ENCODE measurements at regions of chr11 and their contacts with region 1.

Region 1: DNA sequence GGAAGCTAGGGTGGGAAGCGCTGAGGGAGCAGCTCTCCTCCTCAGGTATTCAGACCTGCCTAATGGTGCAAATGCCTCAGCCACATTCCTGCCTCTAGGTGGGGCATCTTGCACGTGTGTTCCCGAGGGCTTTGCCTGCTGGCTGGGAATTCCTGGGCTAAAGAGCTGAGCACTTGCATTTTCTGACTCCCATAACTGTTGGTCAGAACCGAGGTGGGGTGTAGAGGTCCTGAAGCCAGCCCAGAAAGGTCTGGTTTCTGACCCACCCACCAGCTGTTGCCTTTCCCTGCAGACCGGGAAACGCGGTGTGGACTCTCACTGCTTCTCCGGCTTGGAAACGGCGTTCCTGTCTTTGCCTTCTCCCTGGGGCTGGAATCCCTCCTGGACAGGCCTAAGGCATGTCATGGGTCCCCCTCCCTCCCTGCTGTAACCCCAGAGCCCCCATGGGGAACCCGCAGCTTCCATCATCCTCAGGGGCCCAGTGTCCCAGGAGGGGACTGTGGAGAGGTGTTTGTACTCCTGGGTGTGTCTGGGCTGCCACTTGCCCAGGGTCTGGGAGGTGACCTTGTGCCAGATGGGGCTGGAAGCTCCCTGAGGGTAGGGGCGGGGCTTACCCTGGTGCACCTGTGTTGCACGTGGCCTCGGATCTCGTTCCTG is 24.0 kb upstream of the SMIM38 start:
- DNase-seq: peak in 1 of 2 donors; percentile 70
- ATAC-seq: peak; percentile 57
- H3K4me3 ChIP-seq: no peak overlapping the region
- H3K27ac ChIP-seq: peak overlapping the region in 1 of 2 donors; percentile 39
- H3K4me1 ChIP-seq: peaks cover 0 to 2% of the 10 kb centered on the region in 2 donors
- H3K27me3 ChIP-seq: no peaks in the 10 kb centered on the region

Region 2: DNA sequence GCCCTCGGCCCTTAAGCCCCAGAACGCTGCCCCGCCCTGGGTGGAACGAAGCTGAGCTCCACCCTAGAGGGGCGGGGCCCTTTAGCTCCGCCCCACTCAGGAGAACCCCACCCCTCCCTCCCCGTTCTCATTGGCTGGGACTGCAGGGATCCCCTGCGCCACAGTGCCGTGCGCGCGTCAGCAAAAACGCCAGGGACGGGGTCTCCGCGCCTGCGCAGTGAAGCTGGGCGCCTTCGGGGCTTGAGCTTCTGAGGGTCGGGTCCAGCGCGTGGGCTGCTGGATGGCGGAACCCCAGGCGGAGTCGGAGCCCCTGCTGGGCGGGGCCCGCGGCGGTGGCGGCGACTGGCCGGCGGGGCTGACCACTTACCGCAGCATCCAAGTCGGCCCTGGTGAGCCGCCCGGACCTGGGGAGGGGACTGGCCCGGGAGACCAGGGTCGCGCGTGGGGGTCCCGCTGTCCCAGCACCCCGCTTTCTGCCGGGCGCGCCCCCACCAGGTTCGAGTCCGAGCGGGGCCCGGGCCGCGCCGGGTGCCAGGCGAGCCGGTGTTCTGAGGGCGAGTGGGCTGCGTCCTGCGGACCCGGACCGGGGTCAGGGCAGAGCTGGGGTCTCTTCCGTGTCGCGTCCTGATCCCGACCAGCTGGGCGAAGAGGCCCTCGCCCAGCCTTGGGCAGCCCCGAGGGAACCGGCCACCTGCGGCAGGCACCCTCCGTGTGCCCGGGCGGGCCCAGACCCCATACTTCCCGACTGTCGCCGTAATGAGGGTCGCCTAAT is 82.9 kb before region 1 on chr11 and contains the start of gene TPCN2:
- intact Hi-C with region 1: no loop called
- DNase-seq: peak; percentile 95 to 97
- ATAC-seq: peak; percentile 96
- H3K4me3 ChIP-seq: peak within 1 kb of the TSS; percentile 43 to 72
- H3K27ac ChIP-seq: peak within 1 kb of the TSS; percentile 43 to 57
- H3K4me1 ChIP-seq: no peaks in the 10 kb centered on the region
- H3K27me3 ChIP-seq: no peaks in the 10 kb centered on the region
- total RNA-seq, gene TPCN2: 25.8 to 27.9 TPM

Region 3: GRCh38 chr11:69153661-69154060 is 21.9 kb after region 1 on chr11:
- intact Hi-C with region 1: loop called in 1 of 2 experiments (anchors 1 kb)
- DNase-seq: no peak
- ATAC-seq: no peak
- H3K4me3 ChIP-seq: no peak overlapping the region
- H3K27ac ChIP-seq: no peak overlapping the region
- H3K4me1 ChIP-seq: no peaks in the 10 kb centered on the region
- H3K27me3 ChIP-seq: no peaks in the 10 kb centered on the region

Region 4: GRCh38 chr11:69240332-69241074 is 108.7 kb after region 1 on chr11:
- intact Hi-C with region 1: loop called in 1 of 2 experiments (anchors 10 kb)
- DNase-seq: peak in 1 of 2 donors; percentile 41
- ATAC-seq: no peak
- H3K4me3 ChIP-seq: no peak overlapping the region
- H3K27ac ChIP-seq: no peak overlapping the region
- H3K4me1 ChIP-seq: no peaks in the 10 kb centered on the region
- H3K27me3 ChIP-seq: no peaks in the 10 kb centered on the region